CD8-positive, alpha-beta T cell (primary cell): ENCODE measurements at regions of chr6 and their contacts with region 1.

Region 1: GRCh38 chr6:44932651-44933091 is 395.5 kb upstream of the RUNX2 start:
- DNase-seq: peak; percentile 28 to 87 (median 63)
- ATAC-seq: peak; percentile 79
- H3K4me3 ChIP-seq: peak overlapping the region; percentile 33 to 53
- H3K4me3 Mint-ChIP-seq: peak overlapping the region; percentile 87
- H3K27ac ChIP-seq: peak overlapping the region; percentile 74 to 81
- H3K27ac Mint-ChIP-seq: peak overlapping the region; percentile 98
- H3K4me1 ChIP-seq: peaks cover 45% of the 10 kb centered on the region
- H3K4me1 Mint-ChIP-seq: peaks cover 59% of the 10 kb centered on the region
- H3K27me3 ChIP-seq: no peaks in the 10 kb centered on the region
- H3K27me3 Mint-ChIP-seq: no peaks in the 10 kb centered on the region
- CTCF ChIP-seq: no peak

Region 2: GRCh38 chr6:43120944-43121913 is 1811.4 kb before region 1 on chr6:
- CTCF ChIA-PET with region 1: no interaction called
- POLR2A ChIA-PET with region 1: no interaction called
- intact Hi-C with region 1: no loop called
- DNase-seq: no peak
- ATAC-seq: no peak
- H3K4me3 ChIP-seq: no peak overlapping the region
- H3K4me3 Mint-ChIP-seq: no peak overlapping the region
- H3K27ac ChIP-seq: no peak overlapping the region
- H3K27ac Mint-ChIP-seq: no peak overlapping the region
- H3K4me1 ChIP-seq: no peaks in the 10 kb centered on the region
- H3K4me1 Mint-ChIP-seq: no peaks in the 10 kb centered on the region
- H3K27me3 ChIP-seq: no peaks in the 10 kb centered on the region
- H3K27me3 Mint-ChIP-seq: no peaks in the 10 kb centered on the region
- CTCF ChIP-seq: no peak

Region 3: DNA sequence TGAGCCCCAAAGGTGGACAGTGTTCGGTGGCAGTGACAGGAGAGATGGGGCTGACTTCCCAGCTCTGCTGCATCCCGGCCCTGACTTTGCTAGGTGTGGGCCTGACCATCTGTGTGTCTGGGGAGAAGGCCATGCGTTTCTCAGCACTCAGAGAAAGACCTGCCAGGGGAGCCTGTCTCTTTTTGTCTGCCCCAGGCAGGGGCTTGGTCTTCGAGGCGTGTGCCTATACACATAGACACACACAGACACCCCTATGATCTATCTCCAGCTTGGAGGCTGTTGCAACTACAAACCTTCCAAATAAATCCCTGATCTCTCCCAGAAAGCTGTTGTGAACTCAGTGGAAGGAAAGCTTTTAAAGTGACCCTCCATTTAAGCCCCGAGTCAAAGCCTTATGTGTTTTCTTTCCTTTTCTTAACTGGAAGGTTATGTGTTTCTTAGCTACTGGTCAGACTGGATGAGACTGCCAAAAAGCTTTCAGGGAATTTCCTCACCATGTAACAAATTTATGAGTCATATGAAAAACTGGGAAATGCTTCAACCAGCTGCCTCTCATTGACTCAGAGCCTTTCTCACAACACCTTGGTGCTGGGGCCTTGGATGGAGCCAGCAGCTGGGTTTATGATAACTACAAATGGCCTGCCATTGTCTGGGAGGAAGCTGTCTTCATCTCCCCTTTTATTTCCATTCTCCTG is 442.6 kb before region 1 on chr6:
- CTCF ChIA-PET with region 1: no interaction called
- POLR2A ChIA-PET with region 1: no interaction called
- intact Hi-C with region 1: no loop called
- DNase-seq: no peak
- ATAC-seq: no peak
- H3K4me3 ChIP-seq: no peak overlapping the region
- H3K4me3 Mint-ChIP-seq: no peak overlapping the region
- H3K27ac ChIP-seq: no peak overlapping the region
- H3K27ac Mint-ChIP-seq: no peak overlapping the region
- H3K4me1 ChIP-seq: no peaks in the 10 kb centered on the region
- H3K4me1 Mint-ChIP-seq: no peaks in the 10 kb centered on the region
- H3K27me3 ChIP-seq: no peaks in the 10 kb centered on the region
- H3K27me3 Mint-ChIP-seq: peaks cover 13% of the 10 kb centered on the region
- CTCF ChIP-seq: no peak

Region 4: GRCh38 chr6:44906761-44907160 is 25.9 kb before region 1 on chr6:
- CTCF ChIA-PET with region 1: no interaction called
- POLR2A ChIA-PET with region 1: no interaction called
- intact Hi-C with region 1: no loop called
- DNase-seq: no peak
- ATAC-seq: no peak
- H3K4me3 ChIP-seq: no peak overlapping the region
- H3K4me3 Mint-ChIP-seq: no peak overlapping the region
- H3K27ac ChIP-seq: no peak overlapping the region
- H3K27ac Mint-ChIP-seq: no peak overlapping the region
- H3K4me1 ChIP-seq: no peaks in the 10 kb centered on the region
- H3K4me1 Mint-ChIP-seq: peaks cover 12% of the 10 kb centered on the region
- H3K27me3 ChIP-seq: no peaks in the 10 kb centered on the region
- H3K27me3 Mint-ChIP-seq: no peaks in the 10 kb centered on the region
- CTCF ChIP-seq: no peak

Region 5: GRCh38 chr6:44966449-44967092 is 33.9 kb after region 1 on chr6:
- CTCF ChIA-PET with region 1: no interaction called
- POLR2A ChIA-PET with region 1: no interaction called
- intact Hi-C with region 1: loop called in 1 of 2 experiments (anchors 5 kb)
- DNase-seq: no peak
- ATAC-seq: no peak
- H3K4me3 ChIP-seq: no peak overlapping the region
- H3K4me3 Mint-ChIP-seq: no peak overlapping the region
- H3K27ac ChIP-seq: no peak overlapping the region
- H3K27ac Mint-ChIP-seq: no peak overlapping the region
- H3K4me1 ChIP-seq: peaks cover 24% of the 10 kb centered on the region
- H3K4me1 Mint-ChIP-seq: peaks cover 30% of the 10 kb centered on the region
- H3K27me3 ChIP-seq: no peaks in the 10 kb centered on the region
- H3K27me3 Mint-ChIP-seq: no peaks in the 10 kb centered on the region
- CTCF ChIP-seq: no peak

Region 6: DNA sequence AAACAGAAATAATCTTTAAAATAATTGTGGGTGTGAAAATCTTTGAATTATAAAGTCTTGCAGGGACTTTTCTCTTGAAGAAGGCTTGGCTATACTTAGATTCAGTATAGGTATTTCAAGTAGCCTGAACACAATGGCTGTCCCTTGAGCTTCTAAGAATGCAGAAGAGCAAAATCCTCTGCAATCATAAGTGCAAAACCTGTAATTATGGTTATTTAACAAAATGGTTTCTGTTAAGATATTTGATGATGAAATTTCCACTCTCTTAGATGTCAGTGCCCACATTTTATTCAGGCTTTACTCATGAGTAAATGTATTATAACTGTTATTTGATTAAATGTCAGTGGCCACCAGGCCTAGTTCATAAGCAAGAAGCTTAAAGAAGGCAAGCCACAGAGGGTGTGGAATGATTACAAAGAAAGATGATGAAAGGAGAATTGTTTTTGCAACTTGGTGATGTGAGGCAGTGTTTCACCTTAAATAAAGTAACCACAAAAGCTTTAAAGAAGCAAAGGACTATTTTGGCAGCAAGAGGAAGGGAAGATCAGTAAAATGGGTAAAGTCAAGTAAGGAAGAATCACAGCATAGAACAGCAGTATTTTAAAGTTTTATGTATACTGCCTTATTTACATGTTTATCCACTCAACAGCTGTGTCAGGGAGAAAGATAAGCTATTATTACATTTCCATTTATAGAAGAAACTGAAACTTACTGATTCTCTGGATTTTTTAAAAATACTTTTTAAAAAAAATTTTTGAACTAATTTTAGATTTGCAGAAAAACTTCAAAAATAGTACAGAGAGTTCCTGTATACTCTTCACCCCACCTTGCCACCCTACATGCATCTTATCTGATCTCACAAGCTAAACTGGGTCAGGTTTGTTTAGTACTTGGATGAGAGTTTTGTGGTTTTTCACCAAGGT is 44.3 kb after region 1 on chr6:
- CTCF ChIA-PET with region 1: interaction called, 3 read pairs
- POLR2A ChIA-PET with region 1: no interaction called
- intact Hi-C with region 1: loop called in 1 of 2 experiments (anchors 2 kb)
- DNase-seq: peak in 3 of 9 experiments; percentile 38 to 68 (median 58)
- ATAC-seq: peak; percentile 84
- H3K4me3 ChIP-seq: no peak overlapping the region
- H3K4me3 Mint-ChIP-seq: peak overlapping the region; percentile 60
- H3K27ac ChIP-seq: peak overlapping the region; percentile 4 to 24
- H3K27ac Mint-ChIP-seq: peak overlapping the region; percentile 85
- H3K4me1 ChIP-seq: peaks cover 39% of the 10 kb centered on the region
- H3K4me1 Mint-ChIP-seq: peaks cover 51% of the 10 kb centered on the region
- H3K27me3 ChIP-seq: no peaks in the 10 kb centered on the region
- H3K27me3 Mint-ChIP-seq: no peaks in the 10 kb centered on the region
- CTCF ChIP-seq: no peak

Region 7: GRCh38 chr6:45310118-45310788 is 377.6 kb after region 1 on chr6:
- CTCF ChIA-PET with region 1: no interaction called
- POLR2A ChIA-PET with region 1: interaction called, 7 read pairs
- intact Hi-C with region 1: loop called in 1 of 2 experiments (anchors 5 kb)
- DNase-seq: peak; percentile 2 to 80 (median 51)
- ATAC-seq: peak; percentile 87
- H3K4me3 ChIP-seq: peak overlapping the region; percentile 14 to 28
- H3K4me3 Mint-ChIP-seq: peak overlapping the region; percentile 64
- H3K27ac ChIP-seq: peak overlapping the region; percentile 29 to 45
- H3K27ac Mint-ChIP-seq: peak overlapping the region; percentile 95
- H3K4me1 ChIP-seq: peaks cover 35% of the 10 kb centered on the region
- H3K4me1 Mint-ChIP-seq: peaks cover 65% of the 10 kb centered on the region
- H3K27me3 ChIP-seq: no peaks in the 10 kb centered on the region
- H3K27me3 Mint-ChIP-seq: no peaks in the 10 kb centered on the region
- CTCF ChIP-seq: no peak

Region 8: DNA sequence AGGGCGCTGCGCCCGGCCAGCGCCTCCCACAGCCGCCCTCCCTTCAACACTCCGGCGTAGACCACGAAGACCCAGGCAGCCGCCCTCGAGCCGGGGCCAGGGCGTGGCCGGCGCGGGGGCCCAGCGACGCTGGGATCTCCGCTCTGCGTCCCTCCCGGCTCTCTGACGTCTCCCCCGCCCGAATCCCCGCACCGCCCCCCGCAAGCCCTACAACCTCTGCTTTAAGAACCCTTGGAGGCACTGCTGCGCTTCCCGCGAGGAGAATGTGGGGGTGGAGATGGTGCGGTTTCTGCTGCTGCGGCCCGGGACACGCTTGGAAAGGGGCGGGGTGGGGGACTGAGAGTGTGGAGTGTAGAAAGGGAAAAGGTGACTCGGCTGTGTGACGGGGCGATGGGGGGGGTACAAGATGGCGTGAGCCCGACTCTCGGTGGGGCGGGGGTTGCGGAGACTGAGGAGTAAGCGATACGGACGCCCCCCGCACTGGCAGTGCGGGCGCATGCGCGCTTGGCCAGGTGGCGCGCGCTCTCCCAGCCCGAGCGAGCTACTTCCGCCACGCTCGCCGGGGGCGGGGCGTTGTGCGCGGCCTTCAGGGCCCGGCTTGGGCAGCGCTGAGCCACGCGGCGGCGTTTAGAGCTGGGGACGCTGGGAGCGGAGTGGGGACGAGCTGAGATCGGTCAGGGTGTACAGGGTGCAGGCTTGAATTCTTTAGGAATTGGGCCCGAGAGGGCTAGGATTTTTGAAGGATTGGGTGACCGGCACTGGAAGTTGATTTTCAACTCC is 445.1 kb after region 1 on chr6 and contains the start of gene SUPT3H:
- CTCF ChIA-PET with region 1: no interaction called
- POLR2A ChIA-PET with region 1: interaction called, 7 read pairs
- intact Hi-C with region 1: loop called (anchors 2 kb)
- DNase-seq: peak; percentile 79 to 98 (median 91)
- ATAC-seq: peak; percentile 79
- H3K4me3 ChIP-seq: peak within 1 kb of the TSS; percentile 73 to 90
- H3K4me3 Mint-ChIP-seq: peak within 1 kb of the TSS; percentile 96
- H3K27ac ChIP-seq: peak within 1 kb of the TSS; percentile 83 to 95
- H3K27ac Mint-ChIP-seq: peak within 1 kb of the TSS; percentile 99
- H3K4me1 ChIP-seq: peaks cover 8% of the 10 kb centered on the region
- H3K4me1 Mint-ChIP-seq: peaks cover 29% of the 10 kb centered on the region
- H3K27me3 ChIP-seq: no peaks in the 10 kb centered on the region
- H3K27me3 Mint-ChIP-seq: no peaks in the 10 kb centered on the region
- CTCF ChIP-seq: no peak
- total RNA-seq, gene SUPT3H: 9.4 to 10.7 TPM